Breast epithelium (tissue), 4 donors: ENCODE measurements at regions of chr15 and their contacts with region 1.

Region 1: DNA sequence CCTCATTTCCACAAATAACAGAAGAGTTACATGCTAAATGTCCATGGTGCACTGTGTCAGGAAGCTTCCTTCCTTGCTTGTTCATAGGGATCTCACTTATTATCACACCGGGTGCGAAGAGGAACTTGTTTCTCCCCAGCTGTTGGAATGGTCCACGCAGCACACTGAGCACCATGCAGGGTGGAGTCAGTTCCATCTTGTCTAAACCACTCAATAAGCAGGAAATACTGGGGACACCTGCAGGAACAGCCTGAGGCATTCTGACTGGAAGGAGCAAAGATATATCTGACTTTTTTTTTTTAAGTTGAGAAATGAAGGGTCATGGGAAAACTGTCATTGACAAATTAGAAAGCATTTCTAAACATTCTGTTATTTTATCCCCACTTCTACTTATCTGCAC is 70.0 kb upstream of the WDR72 start:
- DNase-seq: no peak
- H3K4me3 ChIP-seq: no peak overlapping the region
- H3K27ac ChIP-seq: no peak overlapping the region
- H3K4me1 ChIP-seq: no peaks in the 10 kb centered on the region
- H3K27me3 ChIP-seq: no peaks in the 10 kb centered on the region
- CTCF ChIP-seq: no peak
- POLR2A ChIP-seq: no peak

Region 2: GRCh38 chr15:52005748-52006701 is 1823.4 kb before region 1 on chr15:
- intact Hi-C with region 1: no loop called
- DNase-seq: no peak
- H3K4me3 ChIP-seq: no peak overlapping the region
- H3K27ac ChIP-seq: no peak overlapping the region
- H3K4me1 ChIP-seq: no peaks in the 10 kb centered on the region
- H3K27me3 ChIP-seq: no peaks in the 10 kb centered on the region
- CTCF ChIP-seq: no peak
- POLR2A ChIP-seq: no peak

Region 3: DNA sequence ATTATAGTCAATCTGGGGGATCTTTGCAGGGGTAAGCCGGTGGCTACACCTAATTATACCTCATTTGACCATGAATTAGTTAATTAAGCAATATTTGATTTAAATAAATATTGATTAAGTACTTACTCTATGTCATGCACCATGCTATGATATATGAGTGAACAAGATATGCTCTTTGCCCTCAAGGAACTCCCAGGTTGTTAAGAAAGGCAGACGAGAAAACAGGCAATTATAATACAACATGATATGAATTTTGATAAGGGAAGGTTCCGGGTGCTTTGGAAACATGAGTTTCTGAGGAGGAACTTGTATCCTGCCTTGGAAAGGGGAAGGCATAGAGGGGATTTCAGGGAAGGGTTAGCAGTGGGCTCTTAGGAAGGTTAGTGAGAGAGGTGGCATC is 482.9 kb before region 1 on chr15:
- intact Hi-C with region 1: loop called (anchors 10 kb)
- DNase-seq: no peak
- H3K4me3 ChIP-seq: no peak overlapping the region
- H3K27ac ChIP-seq: no peak overlapping the region
- H3K4me1 ChIP-seq: no peaks in the 10 kb centered on the region
- H3K27me3 ChIP-seq: no peaks in the 10 kb centered on the region
- CTCF ChIP-seq: no peak
- POLR2A ChIP-seq: no peak

Region 4: DNA sequence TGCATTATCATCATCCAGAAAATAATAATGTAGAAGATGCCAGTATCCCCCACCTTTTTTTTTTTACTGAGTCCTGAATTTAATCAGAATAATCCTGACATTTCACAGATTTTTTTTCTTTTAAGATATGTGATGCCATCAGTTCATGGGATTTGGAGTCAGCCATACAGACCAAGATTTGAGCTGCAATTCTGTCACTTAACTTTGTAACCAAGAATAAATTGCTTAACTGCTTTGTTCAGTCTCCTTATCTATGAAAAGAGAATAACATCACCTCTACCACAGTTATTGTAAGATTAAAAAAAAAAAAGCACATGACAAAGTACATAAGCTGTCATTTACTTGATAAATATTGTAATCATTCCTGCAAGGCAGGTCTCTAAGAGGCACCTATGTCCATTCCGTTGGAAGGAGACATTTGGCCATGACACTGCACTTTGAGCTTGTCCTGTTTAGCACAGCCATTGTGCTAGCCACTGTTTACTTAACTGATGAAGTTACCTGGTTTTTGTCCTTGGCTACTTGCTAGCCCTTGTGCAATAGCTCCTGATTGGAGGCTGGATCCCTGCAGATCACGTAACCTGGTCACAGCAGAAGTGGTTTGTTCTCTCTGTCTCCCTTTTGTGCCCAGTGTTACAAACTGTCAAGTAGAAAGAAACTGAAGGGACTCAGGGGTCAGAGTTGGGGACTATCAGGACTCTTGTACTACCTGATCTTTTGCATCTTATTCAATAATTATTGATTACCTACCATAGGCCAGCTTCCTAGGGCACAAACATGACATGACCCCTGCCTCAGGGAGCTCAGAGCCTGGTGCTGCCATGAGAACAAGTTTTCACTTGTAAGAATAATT is 376.0 kb before region 1 on chr15:
- intact Hi-C with region 1: no loop called
- DNase-seq: no peak
- H3K4me3 ChIP-seq: no peak overlapping the region
- H3K27ac ChIP-seq: no peak overlapping the region
- H3K4me1 ChIP-seq: no peaks in the 10 kb centered on the region
- H3K27me3 ChIP-seq: no peaks in the 10 kb centered on the region
- CTCF ChIP-seq: no peak
- POLR2A ChIP-seq: no peak

Region 5: GRCh38 chr15:53644681-53645080 is 184.8 kb before region 1 on chr15:
- intact Hi-C with region 1: no loop called
- DNase-seq: no peak
- H3K4me3 ChIP-seq: no peak overlapping the region
- H3K27ac ChIP-seq: no peak overlapping the region
- H3K4me1 ChIP-seq: no peaks in the 10 kb centered on the region
- H3K27me3 ChIP-seq: no peaks in the 10 kb centered on the region
- CTCF ChIP-seq: no peak
- POLR2A ChIP-seq: no peak